Sciatic nerve (tissue), 2 donors: ENCODE measurements at regions of chr4 and their contacts with region 1.

Region 1: GRCh38 chr4:144634978-144635747 is 10.8 kb upstream of the HHIP start:
- DNase-seq: no peak
- ATAC-seq: no peak

Region 2: GRCh38 chr4:145075742-145076468 is 440.7 kb after region 1 on chr4:
- intact Hi-C with region 1: loop called (anchors 5 kb)
- DNase-seq: no peak
- ATAC-seq: no peak